HEK293 (cell line): ENCODE measurements at regions of chr11 and their contacts with region 1.

Region 1: GRCh38 chr11:17063171-17064002 is 14.1 kb downstream of the RPS13 start:
- H3K4me3 ChIP-seq: no peak overlapping the region
- H3K27ac ChIP-seq: no peak overlapping the region
- H3K4me1 ChIP-seq: no peaks in the 10 kb centered on the region
- CTCF ChIP-seq: no peak

Region 2: GRCh38 chr11:16785520-16786128 is 277.8 kb before region 1 on chr11:
- CTCF ChIA-PET with region 1: interaction called, 40 read pairs
- POLR2A ChIA-PET with region 1: no interaction called
- H3K4me3 ChIP-seq: no peak overlapping the region
- H3K27ac ChIP-seq: no peak overlapping the region
- H3K4me1 ChIP-seq: no peaks in the 10 kb centered on the region
- CTCF ChIP-seq: peak; percentile 54; the same call in 1 of the 2 replicates

Region 3: DNA sequence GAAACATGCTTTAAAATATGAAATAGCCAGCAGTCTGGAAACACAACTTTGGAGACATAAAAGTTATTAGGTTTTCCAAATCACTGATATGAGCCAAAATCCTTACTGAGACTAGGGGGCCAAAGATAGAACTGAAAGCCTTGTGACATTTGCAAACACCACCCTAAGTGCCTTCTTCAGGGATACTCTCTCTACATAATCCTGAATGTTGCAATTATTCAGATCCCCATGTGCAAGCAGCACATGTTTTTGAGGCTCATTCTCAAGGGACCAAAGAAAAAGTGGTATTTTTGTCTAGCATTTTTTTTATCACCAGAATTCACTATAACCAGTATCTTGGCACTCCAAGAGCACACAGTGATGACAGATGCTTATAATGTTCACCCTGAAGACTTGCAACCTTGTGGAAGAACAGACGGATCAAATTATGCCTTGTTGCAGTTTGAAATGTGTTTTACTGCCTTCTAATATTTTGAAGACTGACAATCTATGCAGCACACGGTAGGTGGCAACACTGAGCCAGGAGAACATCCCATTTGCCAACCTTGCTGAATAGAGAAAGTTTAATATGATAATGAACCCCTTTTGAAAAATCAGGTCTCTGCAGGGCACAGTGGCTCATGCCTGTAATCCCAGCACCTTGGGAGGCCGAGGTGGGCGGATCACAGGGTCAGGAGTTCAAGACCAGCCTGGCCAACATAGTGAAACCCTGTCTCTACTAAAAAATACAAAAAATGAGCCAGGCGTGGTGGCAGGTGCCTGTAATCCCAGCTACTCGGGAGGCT is 127.7 kb before region 1 on chr11:
- CTCF ChIA-PET with region 1: interaction called, 15 read pairs
- POLR2A ChIA-PET with region 1: interaction called, 4 read pairs
- H3K4me3 ChIP-seq: no peak overlapping the region
- H3K27ac ChIP-seq: no peak overlapping the region
- H3K4me1 ChIP-seq: 0 out of 2 replicates have a peak, but pooled peaks cover 2% of the 10 kb centered on the region
- CTCF ChIP-seq: peak; percentile 48; the same call in 1 of the 2 replicates

Region 4: GRCh38 chr11:16945671-16946469 is 117.5 kb before region 1 on chr11:
- CTCF ChIA-PET with region 1: interaction called, 40 read pairs
- POLR2A ChIA-PET with region 1: interaction called, 5 read pairs
- H3K4me3 ChIP-seq: no peak overlapping the region
- H3K27ac ChIP-seq: no peak overlapping the region
- H3K4me1 ChIP-seq: no peaks in the 10 kb centered on the region
- CTCF ChIP-seq: peak; percentile 76